OCI-LY7 (cell line): ENCODE measurements at regions of chr2 and their contacts with region 1.

Region 1: DNA sequence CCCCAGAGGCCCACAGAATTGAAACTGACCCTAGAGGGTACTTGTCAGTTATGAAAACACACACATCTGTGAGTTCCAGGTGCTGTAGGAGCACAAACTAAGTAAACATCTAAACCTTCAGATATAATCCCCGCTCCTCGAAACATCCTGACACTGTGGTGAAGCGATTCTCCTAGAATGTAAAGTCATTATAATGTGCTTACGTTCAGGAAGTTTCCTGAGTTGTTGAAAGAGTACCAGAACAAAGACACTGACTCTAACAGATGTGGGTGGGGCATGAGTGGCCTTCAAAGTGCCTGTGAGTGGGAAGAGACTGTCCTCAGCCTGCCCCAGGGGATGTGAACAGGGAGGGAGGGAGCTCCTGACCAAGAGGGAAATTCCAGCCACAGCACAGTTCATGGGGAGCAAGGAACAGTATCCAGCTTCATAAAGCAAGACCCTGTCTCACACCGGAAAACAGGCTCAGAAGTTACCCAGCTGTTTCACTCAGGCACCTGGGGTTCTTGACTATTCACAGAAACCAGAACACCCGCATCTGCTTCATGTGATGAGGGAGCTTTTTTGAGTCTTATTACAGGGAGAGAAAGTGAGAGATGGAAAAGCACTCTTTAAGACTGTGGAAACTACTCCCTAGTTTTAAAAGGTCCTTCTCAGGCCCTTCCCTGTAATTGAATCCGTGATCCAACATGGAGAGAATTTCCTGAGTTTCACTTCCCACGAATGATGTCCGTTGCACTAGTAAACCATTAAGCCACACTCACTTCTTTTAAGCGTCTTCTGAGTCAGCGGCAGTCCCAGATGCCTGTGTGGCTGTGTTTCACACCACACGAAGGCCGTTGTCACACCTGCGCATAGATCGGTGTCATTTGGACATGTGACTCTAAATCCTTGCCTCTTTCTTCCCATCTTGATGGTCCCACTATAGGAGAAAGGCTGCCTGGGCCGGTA is 88.6 kb upstream of the EML6 start:
- DNase-seq: peak; percentile 92
- H3K4me3 ChIP-seq: peak overlapping the region; percentile 53
- H3K27ac ChIP-seq: peak overlapping the region; percentile 97
- H3K4me1 ChIP-seq: peaks cover 90% of the 10 kb centered on the region
- CTCF ChIP-seq: no peak

Region 2: DNA sequence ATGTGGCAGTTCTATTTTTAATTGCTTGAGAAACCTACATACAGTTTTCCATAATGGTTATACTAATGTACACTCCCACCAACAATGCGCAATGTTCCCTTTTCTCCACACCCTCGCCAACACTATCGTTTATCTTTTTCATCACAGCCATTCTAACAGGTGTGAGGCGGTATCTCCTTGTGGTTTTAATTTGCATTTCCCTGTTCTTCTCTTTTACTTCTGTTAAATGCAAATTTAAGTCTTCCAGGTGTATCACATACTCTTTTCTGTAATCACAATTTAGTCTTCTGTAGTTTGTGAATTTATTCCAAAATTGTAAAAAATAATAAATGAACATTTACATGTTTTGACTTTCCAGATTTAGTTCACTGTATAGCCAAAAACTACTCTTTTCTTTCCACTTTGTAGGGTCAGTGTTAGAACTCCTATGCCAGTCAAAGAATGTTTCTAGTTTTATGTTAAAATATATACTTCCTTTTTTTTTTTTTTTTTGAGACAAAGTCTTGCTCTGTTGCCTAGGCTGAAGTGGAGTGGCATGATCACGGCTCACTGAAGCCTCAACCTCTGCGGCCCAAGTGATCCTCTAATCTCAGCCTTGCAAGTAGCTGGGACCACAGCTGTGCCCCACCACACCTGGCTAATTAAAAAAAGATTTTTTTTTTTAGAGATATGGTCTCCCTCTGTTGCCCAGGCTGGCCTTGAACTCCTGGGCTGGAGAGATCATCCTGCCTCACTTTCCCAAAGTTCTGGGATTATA is 534.8 kb before region 1 on chr2:
- CTCF ChIA-PET with region 1: no interaction called
- POLR2A ChIA-PET with region 1: interaction called, 3 read pairs
- intact Hi-C with region 1: loop called (anchors 2 kb)
- DNase-seq: peak; percentile 97
- H3K4me3 ChIP-seq: peak overlapping the region; percentile 40
- H3K27ac ChIP-seq: peak overlapping the region; percentile 95
- H3K4me1 ChIP-seq: peaks cover 79% of the 10 kb centered on the region
- CTCF ChIP-seq: no peak

Region 3: GRCh38 chr2:54551123-54551756 is 83.6 kb before region 1 on chr2:
- CTCF ChIA-PET with region 1: no interaction called
- POLR2A ChIA-PET with region 1: interaction called, 5 read pairs
- intact Hi-C with region 1: loop called (anchors 2 kb)
- DNase-seq: peak; percentile 87
- H3K4me3 ChIP-seq: peak overlapping the region; percentile 11
- H3K27ac ChIP-seq: peak overlapping the region; percentile 63
- H3K4me1 ChIP-seq: peaks cover 36% of the 10 kb centered on the region
- CTCF ChIP-seq: no peak

Region 4: DNA sequence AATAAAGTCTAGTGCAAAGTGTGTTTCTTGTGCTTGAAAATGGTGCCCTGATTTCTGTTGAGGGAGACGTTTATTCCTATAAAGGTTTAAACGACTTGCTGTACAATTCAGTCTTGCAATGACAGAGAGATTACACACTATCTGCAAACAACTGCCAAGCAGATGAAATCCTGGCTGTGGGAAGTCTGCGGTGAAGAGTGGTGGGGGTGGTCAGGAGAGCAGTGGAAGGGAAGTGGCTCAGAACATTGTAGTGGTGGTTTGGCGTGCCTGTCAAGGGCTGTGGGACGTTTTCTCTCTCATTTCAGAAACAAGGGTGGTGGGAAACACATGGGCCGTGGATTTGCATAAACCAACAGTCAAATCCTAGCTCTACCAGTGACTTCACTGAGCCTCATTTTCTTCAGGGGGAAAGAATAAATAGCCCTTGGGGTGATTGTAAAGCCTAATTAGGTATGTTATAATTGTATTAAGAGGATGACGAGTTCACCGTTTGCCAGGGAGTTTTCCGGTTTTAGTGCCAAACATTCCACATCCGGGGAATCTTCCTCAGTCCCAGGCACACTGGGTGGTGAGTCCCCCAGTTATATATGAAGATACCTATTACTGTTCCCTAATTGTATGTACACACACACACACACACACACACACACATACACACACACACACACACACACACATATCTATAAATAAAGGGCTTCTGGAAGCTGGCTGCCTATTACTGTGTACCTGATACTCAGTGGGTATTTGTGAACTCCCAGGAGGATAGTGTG is 63.7 kb before region 1 on chr2:
- CTCF ChIA-PET with region 1: no interaction called
- POLR2A ChIA-PET with region 1: interaction called, 4 read pairs
- intact Hi-C with region 1: loop called (anchors 2 kb)
- DNase-seq: peak; percentile 84
- H3K4me3 ChIP-seq: peak overlapping the region; percentile 51
- H3K27ac ChIP-seq: peak overlapping the region; percentile 87
- H3K4me1 ChIP-seq: peaks cover 92% of the 10 kb centered on the region
- CTCF ChIP-seq: no peak